Right ventricle myocardium inferior (tissue), 1 donor: ENCODE measurements at regions of chr20 and their contacts with region 1.

Region 1: DNA sequence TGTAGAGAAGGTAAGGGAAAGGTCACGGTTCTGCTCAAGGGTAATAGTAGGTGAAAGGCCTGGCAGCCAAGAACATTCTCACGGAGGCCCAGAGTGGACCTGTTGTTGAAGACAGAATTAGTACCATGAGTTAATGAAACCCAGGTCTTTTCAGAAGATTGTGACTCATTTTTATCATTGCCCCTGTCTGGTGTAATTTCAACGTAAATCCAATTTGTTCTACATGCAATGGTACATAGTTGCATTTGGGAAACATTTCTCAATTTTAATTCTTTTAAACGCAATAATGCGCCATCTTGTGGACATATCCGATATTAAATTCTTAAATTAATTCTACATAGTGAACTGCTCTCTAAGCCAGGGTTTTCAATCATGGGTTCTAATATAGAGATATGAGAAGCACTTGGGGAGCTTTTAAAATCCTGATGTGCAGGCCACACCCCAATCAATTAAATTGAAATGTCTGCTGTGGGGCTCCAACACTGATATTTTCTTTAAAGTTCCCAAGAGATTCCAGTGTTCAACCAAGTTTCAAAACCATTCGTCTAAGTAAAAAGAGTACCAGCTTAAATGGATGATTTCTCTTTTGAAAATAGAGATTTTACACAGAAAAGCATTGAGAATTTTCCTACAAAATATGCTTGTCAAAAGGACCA is 257.4 kb downstream of the PLCB1 start:
- DNase-seq: peak; percentile 54
- ATAC-seq: peak; percentile 40

Region 2: DNA sequence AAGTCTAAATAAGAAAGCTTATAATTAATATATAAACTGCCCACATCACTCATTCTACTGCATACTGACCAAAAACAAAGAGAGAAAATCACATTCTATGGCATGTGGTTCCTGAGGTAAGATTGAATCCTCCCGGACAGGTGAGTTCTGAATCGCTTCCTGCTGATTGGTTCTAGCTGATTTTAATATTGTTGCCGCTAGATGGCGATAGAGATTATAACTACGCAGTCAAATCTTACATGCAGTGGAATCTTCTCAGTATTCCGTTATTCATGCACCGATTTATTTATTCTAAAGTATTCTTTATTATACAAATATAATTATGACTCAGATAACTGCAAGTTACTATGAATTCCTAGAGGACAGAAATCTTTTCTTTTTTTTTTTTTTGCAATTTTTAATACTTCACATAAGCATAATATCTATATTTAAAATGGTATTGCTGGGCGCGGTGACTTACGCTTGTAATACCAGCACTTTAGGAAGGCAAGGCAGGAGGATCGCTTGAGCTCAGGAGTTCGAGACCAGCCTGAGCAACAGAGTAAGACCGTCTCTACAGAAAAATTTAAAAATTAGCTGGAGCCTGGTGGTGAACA is 345.7 kb before region 1 on chr20:
- intact Hi-C with region 1: loop called (anchors 5 kb)
- DNase-seq: peak; percentile 13
- ATAC-seq: peak; percentile 46

Region 3: GRCh38 chr20:8331740-8332412 is 57.6 kb before region 1 on chr20:
- intact Hi-C with region 1: no loop called
- DNase-seq: no peak
- ATAC-seq: no peak

Region 4: DNA sequence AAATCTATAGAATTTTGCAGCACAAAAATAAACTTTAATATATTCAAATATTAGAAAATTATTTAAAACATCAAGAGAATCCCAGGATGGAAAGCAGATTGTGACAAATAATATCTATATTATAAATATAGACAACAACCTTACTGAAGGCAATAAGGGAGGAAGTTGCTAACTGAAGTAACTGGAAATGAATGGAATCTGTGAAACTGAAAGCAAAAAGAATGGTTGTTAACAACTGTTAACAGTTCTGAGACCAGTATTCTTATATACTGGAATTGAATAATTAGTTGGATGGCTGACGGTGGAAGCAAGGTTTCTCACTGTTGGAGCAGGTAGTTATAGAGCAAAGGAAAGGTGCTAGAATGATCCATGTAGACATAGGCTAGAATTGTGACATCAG is 37.0 kb before region 1 on chr20:
- intact Hi-C with region 1: no loop called
- DNase-seq: no peak
- ATAC-seq: no peak